ENCODE measurements at regions of chr4 and their contacts with region 1.

Region 1: DNA sequence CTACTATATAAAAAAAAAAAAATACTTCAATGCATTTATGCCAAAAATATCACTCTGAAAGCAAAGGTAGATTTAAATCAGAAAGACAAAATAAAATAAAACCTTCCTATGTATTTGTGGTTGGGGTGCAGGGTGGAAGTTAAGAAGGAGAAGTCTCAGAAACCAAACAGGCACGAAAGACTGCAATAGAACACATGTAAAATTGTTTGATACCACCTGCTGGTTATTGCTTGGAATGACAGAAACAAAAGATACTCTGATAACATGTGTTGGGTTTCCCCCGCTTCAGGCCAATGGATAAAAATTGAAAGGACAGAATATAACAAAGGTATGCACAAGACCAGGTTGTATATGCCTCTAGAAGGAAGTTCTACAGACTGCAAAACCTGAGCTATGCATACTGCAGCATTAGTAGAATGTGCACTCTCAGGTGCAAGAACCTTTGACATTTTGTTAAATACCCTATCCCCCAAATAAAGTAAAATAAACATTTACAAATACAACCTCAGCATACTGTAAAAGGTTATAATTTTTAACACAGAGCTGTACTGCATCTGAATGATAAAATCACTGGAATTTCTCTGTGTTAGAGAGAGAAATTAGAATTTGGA is 118.8 kb downstream of the GABRA2 start:
- DNase-seq: no peak
- ATAC-seq: no peak
- H3K4me3 ChIP-seq: no peak overlapping the region
- H3K27ac ChIP-seq: no peak overlapping the region
- H3K4me1 ChIP-seq: no peaks in the 10 kb centered on the region
- H3K27me3 ChIP-seq: peaks cover 0 to 7% (median 0%) of the 10 kb centered on the region in 9 donors
- CTCF ChIP-seq: peak in 11 of 12 donors; percentile 21 to 51 (median 37)
- POLR2A ChIP-seq: no peak

Region 2: DNA sequence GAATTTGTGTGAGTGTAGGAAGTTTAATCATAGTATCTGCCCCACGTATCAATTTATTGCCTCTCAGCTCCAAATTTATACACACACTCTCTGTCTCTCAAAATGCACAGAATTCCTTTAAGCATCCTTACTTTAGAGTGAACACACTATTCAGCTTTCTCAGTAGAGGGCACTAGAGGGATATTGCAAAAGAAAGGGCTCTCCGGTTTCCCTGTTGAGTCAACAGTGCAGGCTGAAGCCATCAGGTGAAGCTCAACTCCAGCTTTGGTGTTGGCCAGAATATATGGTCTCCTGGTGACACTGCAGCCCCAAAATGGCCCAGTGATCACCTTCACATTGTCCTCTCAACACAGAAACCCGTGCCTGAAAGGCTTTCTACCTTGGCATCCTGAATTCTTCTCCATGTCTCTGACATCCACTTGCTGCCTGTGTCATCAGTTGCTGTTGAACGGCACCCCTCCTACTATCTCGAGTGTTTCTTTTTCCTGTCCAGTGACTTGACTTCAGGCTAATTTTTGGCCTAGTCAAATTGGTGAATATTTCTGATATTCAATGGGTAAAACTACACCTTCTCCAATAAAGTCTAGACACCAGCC is 817.7 kb before region 1 on chr4:
- intact Hi-C with region 1: loop called in 8 of 10 experiments (anchors 2 to 10 kb)
- DNase-seq: no peak
- ATAC-seq: peak in 3 of 4 donors; percentile 58 to 75 (median 67)
- H3K4me3 ChIP-seq: no peak overlapping the region
- H3K27ac ChIP-seq: no peak overlapping the region
- H3K4me1 ChIP-seq: no peaks in the 10 kb centered on the region
- H3K27me3 ChIP-seq: no peaks in the 10 kb centered on the region
- CTCF ChIP-seq: peak; percentile 21 to 57 (median 40)
- POLR2A ChIP-seq: no peak

Region 3: DNA sequence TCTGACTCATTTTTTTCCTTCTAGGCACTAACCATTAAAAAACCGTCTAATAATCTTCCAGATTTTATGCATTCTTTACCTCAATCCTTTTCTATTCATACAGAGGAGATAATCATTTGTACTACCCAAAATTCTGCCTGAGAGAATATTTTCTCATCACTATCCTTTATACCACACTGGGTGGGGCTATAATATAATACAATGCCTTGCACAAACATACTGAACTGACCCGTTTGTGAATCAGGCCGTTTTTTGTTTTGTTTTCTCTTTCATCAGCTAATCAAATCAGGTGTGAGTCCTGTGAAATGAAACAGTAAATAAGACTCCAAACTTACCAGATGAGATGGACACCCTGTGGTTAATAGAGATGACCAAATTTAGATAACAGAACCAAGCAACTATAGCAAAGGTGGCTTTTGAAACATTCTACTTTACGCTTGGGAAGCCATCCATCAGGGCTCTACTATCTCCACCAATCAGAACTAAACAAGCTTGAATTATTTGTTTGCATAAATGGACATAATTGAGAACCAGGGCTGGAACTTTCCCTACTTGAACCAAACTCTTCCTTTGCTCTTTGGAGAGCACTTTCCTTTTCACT is 720.2 kb before region 1 on chr4:
- intact Hi-C with region 1: loop called in 3 of 10 experiments (anchors 2 to 10 kb)
- DNase-seq: no peak
- ATAC-seq: no peak
- H3K4me3 ChIP-seq: no peak overlapping the region
- H3K27ac ChIP-seq: no peak overlapping the region
- H3K4me1 ChIP-seq: no peaks in the 10 kb centered on the region
- H3K27me3 ChIP-seq: no peaks in the 10 kb centered on the region
- CTCF ChIP-seq: peak in 2 of 12 donors; percentile 14 to 18
- POLR2A ChIP-seq: no peak

Region 4: GRCh38 chr4:46515940-46516339 is 244.8 kb after region 1 on chr4:
- intact Hi-C with region 1: no loop called
- DNase-seq: no peak
- ATAC-seq: no peak
- H3K4me3 ChIP-seq: no peak overlapping the region
- H3K27ac ChIP-seq: no peak overlapping the region
- H3K4me1 ChIP-seq: no peaks in the 10 kb centered on the region
- H3K27me3 ChIP-seq: no peaks in the 10 kb centered on the region
- CTCF ChIP-seq: no peak
- POLR2A ChIP-seq: no peak